ENCODE measurements at regions of chr6 and their contacts with region 1.

Region 1: GRCh38 chr6:20401205-20402091 is at the start of gene E2F3:
- DNase-seq: peak; percentile 99
- H3K4me3 Mint-ChIP-seq: peak within 1 kb of the TSS; percentile 97
- H3K27ac Mint-ChIP-seq: peak within 1 kb of the TSS; percentile 99
- H3K4me1 Mint-ChIP-seq: peaks cover 32% of the 10 kb centered on the region
- H3K27me3 Mint-ChIP-seq: no peaks in the 10 kb centered on the region
- total RNA-seq, gene E2F3: 27.9 TPM in 2 replicates

Region 2: DNA sequence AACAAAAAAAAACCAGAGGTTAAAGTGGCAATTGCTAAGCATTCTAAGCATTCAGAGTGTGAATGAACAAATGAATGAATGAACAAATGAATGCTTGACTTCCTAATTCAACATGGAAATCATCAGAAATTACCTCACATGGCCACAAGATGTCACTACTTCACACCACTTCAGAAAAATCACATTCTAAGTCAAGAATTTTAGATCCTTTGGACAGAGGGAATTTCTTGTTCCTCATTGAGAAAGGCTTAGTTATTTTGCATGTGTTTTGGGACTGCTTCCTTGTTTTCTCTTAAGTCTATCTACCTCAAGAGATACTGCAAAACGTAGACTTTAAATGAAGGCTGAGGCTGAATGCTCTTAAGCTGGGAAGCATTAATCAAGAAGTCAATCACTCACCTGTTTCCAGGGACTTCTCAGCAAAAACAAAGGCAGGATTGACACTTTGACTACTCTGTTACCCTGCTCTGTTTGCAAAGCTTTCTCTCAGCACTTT is 309.3 kb before region 1 on chr6:
- intact Hi-C with region 1: loop called (anchors 5 kb)
- DNase-seq: no peak
- H3K4me3 Mint-ChIP-seq: no peak overlapping the region
- H3K27ac Mint-ChIP-seq: no peak overlapping the region
- H3K4me1 Mint-ChIP-seq: no peaks in the 10 kb centered on the region
- H3K27me3 Mint-ChIP-seq: no peaks in the 10 kb centered on the region

Region 3: GRCh38 chr6:20291764-20292580 is 109.5 kb before region 1 on chr6:
- intact Hi-C with region 1: loop called (anchors 2 kb)
- DNase-seq: peak; percentile 63
- H3K4me3 Mint-ChIP-seq: no peak overlapping the region
- H3K27ac Mint-ChIP-seq: no peak overlapping the region
- H3K4me1 Mint-ChIP-seq: peaks cover 38% of the 10 kb centered on the region
- H3K27me3 Mint-ChIP-seq: no peaks in the 10 kb centered on the region

Region 4: GRCh38 chr6:20334334-20334733 is 67.1 kb before region 1 on chr6:
- intact Hi-C with region 1: loop called (anchors 1 kb)
- DNase-seq: no peak
- H3K4me3 Mint-ChIP-seq: no peak overlapping the region
- H3K27ac Mint-ChIP-seq: no peak overlapping the region
- H3K4me1 Mint-ChIP-seq: peaks cover 39% of the 10 kb centered on the region
- H3K27me3 Mint-ChIP-seq: peaks cover 7% of the 10 kb centered on the region

Region 5: DNA sequence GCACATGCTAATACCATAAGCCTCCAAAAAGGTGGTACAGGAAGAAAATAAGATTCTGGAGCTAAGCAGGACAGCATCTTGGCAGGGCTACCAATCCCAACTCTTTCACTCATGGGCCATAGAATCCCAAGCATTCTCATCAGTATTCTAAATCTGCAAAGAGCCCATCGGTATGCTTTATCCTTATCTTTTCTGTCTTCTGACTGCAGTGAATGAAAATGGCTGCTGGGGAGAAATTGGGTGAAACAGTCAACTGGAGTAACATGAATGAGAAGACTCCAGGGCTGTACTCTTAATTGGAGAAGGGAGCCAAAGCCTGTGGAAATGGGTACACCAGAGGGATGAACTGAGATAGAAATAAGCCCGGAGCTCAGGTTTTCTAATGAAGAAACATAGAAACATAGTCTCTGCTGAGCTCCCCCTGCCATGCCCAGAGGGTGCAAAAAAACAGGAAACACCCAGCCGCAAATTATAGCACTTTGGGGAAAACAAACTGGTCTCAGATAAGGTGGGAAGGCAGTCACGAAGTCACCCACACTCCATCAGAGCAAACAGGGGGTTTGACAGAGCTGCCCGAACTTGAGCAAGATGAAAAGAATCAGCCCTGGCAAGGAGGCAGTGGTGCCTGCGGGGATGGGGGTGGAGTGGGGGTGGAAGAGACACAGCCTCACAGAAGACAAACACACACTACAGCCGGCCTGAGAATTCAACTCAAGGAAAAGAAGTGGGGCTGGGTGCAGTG is 35.2 kb before region 1 on chr6:
- intact Hi-C with region 1: loop called (anchors 2 kb)
- DNase-seq: peak; percentile 34
- H3K4me3 Mint-ChIP-seq: peak overlapping the region; percentile 64
- H3K27ac Mint-ChIP-seq: peak overlapping the region; percentile 93
- H3K4me1 Mint-ChIP-seq: peaks cover 64% of the 10 kb centered on the region
- H3K27me3 Mint-ChIP-seq: no peaks in the 10 kb centered on the region

Region 6: GRCh38 chr6:20497216-20498040 is 96.0 kb after region 1 on chr6:
- intact Hi-C with region 1: no loop called
- DNase-seq: no peak
- H3K4me3 Mint-ChIP-seq: no peak overlapping the region
- H3K27ac Mint-ChIP-seq: no peak overlapping the region
- H3K4me1 Mint-ChIP-seq: no peaks in the 10 kb centered on the region
- H3K27me3 Mint-ChIP-seq: peaks cover 8% of the 10 kb centered on the region

Region 7: DNA sequence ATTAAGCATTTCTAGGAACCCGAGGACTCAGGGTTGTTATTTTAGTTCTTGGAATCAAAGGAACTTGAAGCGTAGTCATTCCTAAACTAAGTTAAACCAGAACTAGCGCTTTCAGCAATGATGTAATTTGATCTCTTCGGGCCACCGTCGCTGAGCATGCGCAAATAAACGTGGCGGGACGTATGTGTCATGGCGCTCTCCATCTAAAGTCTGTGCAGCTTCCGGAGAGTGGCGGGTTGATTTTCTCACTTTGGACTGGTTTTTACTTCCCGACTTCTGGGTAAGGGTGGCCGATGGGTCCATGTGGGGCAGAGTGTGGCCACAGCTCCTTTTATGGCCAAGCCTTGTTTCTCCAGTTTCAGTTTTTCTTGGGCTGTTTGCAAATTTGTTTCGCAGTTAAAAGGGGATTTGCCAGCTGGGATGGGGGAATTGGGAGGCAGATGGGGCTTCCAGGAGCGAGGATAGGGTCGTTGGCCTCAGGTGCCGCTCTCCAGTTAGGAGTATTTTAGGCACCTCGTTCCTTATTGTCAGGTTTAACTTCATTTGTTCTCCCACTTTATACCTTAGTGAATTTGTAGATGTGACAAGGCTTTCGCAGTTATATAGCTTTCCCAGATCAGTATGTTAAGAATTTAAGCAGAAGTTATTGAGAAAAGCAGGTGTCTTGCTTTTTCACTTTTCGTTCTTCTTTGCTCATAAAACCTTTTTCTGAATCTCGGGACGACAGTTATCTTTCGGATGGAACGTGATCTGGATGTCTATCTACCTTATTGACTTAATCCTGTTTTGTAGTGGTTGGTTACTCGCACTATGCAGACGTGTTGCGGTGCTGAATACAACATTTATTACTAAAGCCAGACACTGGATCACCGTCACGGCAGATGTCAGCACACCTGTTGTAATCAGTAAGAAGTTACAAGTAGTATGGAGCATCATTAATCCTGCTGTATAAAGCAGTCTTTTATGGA is 133.1 kb after region 1 on chr6 and contains the start of gene CDKAL1:
- intact Hi-C with region 1: loop called (anchors 1 kb)
- DNase-seq: peak; percentile 91
- H3K4me3 Mint-ChIP-seq: peak within 1 kb of the TSS; percentile 93
- H3K27ac Mint-ChIP-seq: peak within 1 kb of the TSS; percentile 93
- H3K4me1 Mint-ChIP-seq: peaks cover 51% of the 10 kb centered on the region
- H3K27me3 Mint-ChIP-seq: no peaks in the 10 kb centered on the region
- total RNA-seq, gene CDKAL1: 30.5 and 31.2 TPM in 2 replicates

Measured in activated T-helper 2 cell treated with anti-CD3 and anti-CD28 coated beads, Interferon-gamma antibody, Interleukin-2, Interleukin-4, amounts not matched to agents 10 μg/mL and 5 μg/mL and 100 μg/mL, durations not matched to agents 14 hours and 24 hours and 36 hours (primary cell).